H1 (cell line): ENCODE measurements at regions of chr16 and their contacts with region 1.

Region 1: GRCh38 chr16:74309789-74310781 is 13.5 kb downstream of the PSMD7 start:
- DNase-seq: no peak
- H3K4me3 ChIP-seq: no peak overlapping the region
- H3K27ac ChIP-seq: no peak overlapping the region
- H3K4me1 ChIP-seq: no peaks in the 10 kb centered on the region
- H3K27me3 ChIP-seq: peaks cover 0 to 1% (median 0%) of the 10 kb centered on the region in 4 experiments; a peak in 1 of 7 replicates
- CTCF ChIP-seq: peak in 2 of 3 experiments; percentile 79 to 83; a peak in 3 of 4 replicates
- EP300 ChIP-seq: no peak
- POLR2A ChIP-seq: no peak
- RAD21 ChIP-seq: peak; percentile 88

Region 2: DNA sequence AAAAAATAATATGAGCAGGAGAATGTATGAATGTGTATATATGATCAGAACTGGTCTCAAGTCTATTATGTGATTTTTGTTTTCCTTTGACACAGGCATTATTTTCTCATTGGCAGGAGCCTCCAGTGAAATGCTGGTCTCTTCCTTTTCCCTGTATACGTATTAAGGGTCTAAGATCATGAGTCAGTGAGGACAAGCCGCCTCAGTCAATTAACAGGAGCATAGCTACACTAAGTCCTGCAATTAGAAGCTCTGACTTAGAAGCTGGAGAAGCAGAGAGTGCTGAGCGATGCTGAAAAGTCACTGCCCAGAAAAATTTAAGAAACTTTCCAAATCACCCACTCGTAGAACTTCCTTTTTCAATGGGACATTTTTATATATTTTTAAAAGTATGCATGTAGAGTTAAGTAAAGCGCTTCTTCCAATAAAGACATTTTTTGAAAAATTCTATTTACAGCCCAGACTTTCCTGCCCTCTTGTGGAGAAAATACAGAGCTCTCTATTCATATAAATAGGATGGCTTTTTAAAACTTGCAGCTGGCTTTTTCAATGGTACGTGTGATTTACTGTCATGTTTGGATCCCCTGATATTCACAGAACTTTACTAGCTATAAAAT is 83.6 kb before region 1 on chr16:
- CTCF ChIA-PET with region 1: no interaction called
- POLR2A ChIA-PET with region 1: no interaction called
- DNase-seq: no peak
- H3K4me3 ChIP-seq: peak overlapping the region in 1 of 4 experiments; percentile 4; a peak in 1 of 8 replicates
- H3K27ac ChIP-seq: no peak overlapping the region
- H3K4me1 ChIP-seq: peaks cover 0 to 4% (median under 1%) of the 10 kb centered on the region in 4 experiments; a peak in 3 of 7 replicates
- H3K27me3 ChIP-seq: no peaks in the 10 kb centered on the region
- CTCF ChIP-seq: peak in 2 of 3 experiments; percentile 24 to 29; a peak in 2 of 4 replicates
- EP300 ChIP-seq: no peak
- POLR2A ChIP-seq: no peak
- RAD21 ChIP-seq: peak; percentile 62 to 68

Region 3: GRCh38 chr16:74296432-74297144 is 13.5 kb before region 1 on chr16 and contains the start of gene PSMD7:
- CTCF ChIA-PET with region 1: interaction called, 11 read pairs
- POLR2A ChIA-PET with region 1: interaction called, 63 read pairs
- DNase-seq: peak; percentile 46 to 93
- H3K4me3 ChIP-seq: peak within 1 kb of the TSS; percentile 74 to 96 (median 84)
- H3K27ac ChIP-seq: peak within 1 kb of the TSS; percentile 97
- H3K4me1 ChIP-seq: no peaks in the 10 kb centered on the region; a peak in 1 of 7 replicates
- H3K27me3 ChIP-seq: no peaks in the 10 kb centered on the region; a peak in 1 of 7 replicates
- CTCF ChIP-seq: no peak
- EP300 ChIP-seq: no peak
- POLR2A ChIP-seq: peak; percentile 82 to 92
- RAD21 ChIP-seq: no peak
- total RNA-seq, gene PSMD7: 148 and 153 TPM in 2 replicates

Region 4: DNA sequence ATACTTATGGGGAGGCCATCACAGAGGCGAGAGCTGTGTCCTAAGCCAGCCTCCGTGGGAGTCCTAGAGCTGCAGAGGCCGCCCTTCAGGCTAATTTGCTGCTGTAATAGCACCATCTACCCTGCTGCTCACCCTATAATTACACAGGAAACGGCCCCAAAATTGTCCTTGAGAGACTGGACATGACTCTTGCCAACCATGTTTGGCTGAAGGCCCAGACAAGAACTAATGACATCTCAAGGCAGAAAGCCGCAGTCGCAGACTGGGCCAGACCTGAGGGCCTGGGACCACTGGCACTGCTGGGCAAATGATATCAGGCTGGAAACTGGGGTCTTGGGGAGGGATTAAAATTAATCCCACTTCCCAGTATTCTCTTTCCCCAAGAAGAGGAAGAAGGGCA is 10.6 kb after region 1 on chr16:
- CTCF ChIA-PET with region 1: interaction called, 28 read pairs
- POLR2A ChIA-PET with region 1: interaction called, 63 read pairs
- DNase-seq: no peak
- H3K4me3 ChIP-seq: no peak overlapping the region
- H3K27ac ChIP-seq: no peak overlapping the region
- H3K4me1 ChIP-seq: no peaks in the 10 kb centered on the region; a peak in 1 of 7 replicates
- H3K27me3 ChIP-seq: no peaks in the 10 kb centered on the region
- CTCF ChIP-seq: no peak
- EP300 ChIP-seq: no peak
- POLR2A ChIP-seq: no peak
- RAD21 ChIP-seq: no peak